Thyroid gland (tissue), 4 donors: ENCODE measurements at regions of chr14 and their contacts with region 1.

Region 1: DNA sequence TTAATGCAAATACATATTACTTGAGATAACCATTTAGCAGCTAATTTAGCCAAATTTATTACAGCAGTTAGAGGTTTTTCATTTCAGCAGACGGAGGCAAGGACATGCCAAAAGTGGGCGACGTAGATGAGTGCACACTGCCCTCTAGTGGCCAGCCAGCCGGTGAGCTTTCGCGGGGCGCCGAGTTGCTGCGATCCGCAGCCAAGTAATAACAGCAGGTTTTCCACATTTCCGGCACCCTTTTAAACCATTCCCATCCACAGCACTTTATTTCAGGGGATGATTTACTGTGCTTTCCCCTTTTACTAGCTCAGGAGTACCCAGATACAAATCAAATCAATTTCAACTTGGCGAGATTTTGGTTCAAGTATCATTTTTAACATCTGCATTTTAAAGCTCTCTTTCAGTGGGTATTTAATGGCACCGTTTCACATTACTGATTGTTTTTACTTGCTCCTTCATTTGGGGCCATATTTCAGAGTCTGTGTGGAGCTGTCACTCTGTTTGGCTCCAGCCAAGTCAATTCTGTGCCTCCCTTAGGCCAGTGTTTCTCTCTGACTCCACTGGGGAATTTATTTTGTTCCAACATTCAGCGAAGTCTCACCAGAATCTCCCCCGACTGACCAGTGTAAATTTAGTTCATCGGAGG is 158.0 kb downstream of the EGLN3 start:
- DNase-seq: peak; percentile 74 to 78
- H3K4me3 ChIP-seq: no peak overlapping the region
- H3K27ac ChIP-seq: no peak overlapping the region
- H3K4me1 ChIP-seq: peaks cover 0 to 4% of the 10 kb centered on the region in 2 donors
- H3K27me3 ChIP-seq: no peaks in the 10 kb centered on the region
- CTCF ChIP-seq: peak; percentile 75 to 93 (median 84)
- POLR2A ChIP-seq: no peak

Region 2: GRCh38 chr14:32576088-32576795 is 1216.6 kb before region 1 on chr14:
- intact Hi-C with region 1: loop called (anchors 5 kb)
- DNase-seq: peak; percentile 22 to 35
- H3K4me3 ChIP-seq: no peak overlapping the region
- H3K27ac ChIP-seq: no peak overlapping the region
- H3K4me1 ChIP-seq: peaks cover 0 to 4% of the 10 kb centered on the region in 2 donors
- H3K27me3 ChIP-seq: no peaks in the 10 kb centered on the region
- CTCF ChIP-seq: peak; percentile 77 to 95 (median 81)
- POLR2A ChIP-seq: no peak

Region 3: DNA sequence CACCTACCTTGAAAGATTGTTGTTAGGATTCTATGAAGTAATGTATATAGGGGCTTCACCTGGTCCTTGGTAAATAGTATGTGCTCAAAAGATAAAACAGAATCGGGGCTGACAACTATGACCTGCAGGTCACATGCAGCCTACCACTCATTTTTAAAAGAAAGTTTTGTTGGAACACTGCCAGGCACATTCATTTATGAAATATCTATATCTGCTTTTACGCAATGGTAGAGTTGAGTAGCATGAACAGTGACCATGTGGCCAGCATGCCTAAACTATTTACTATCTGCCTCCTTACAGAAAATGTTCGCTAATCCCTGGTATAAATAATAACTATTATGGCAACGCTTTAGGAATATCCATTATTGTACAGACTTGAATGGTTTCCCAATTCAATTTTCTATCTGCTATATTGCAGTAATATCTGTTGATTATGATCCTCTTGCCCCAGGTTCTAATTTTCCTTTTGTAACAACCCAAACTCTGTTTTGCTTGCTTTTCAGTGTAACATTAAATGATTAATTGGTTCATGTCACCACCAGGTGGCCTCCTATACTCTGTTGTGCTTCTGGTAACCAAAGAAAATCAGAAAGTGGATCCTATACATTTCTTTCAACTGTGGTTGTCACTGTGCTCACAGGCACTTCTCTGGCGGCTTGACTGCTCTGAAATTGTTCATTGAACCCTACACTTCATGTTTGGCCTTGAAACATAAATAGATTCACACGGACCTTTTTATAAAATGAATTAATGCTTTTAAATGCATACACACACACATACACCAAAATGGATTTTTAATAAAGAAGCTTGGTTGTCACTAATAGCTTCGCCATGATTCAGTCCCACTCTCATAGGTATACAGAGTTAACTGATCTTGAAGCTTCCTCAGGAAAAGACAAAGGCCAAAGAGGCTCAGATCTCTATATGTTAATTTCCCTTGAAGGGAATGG is 1081.8 kb before region 1 on chr14:
- intact Hi-C with region 1: loop called (anchors 10 kb)
- DNase-seq: peak; percentile 12 to 23
- H3K4me3 ChIP-seq: no peak overlapping the region
- H3K27ac ChIP-seq: no peak overlapping the region
- H3K4me1 ChIP-seq: peaks cover 0 to 4% of the 10 kb centered on the region in 2 donors
- H3K27me3 ChIP-seq: no peaks in the 10 kb centered on the region
- CTCF ChIP-seq: peak in 4 of 6 experiments; percentile 15 to 57 (median 50)
- POLR2A ChIP-seq: no peak